Sciatic nerve (tissue), 2 donors: ENCODE measurements at regions of chr11 and their contacts with region 1.

Region 1: DNA sequence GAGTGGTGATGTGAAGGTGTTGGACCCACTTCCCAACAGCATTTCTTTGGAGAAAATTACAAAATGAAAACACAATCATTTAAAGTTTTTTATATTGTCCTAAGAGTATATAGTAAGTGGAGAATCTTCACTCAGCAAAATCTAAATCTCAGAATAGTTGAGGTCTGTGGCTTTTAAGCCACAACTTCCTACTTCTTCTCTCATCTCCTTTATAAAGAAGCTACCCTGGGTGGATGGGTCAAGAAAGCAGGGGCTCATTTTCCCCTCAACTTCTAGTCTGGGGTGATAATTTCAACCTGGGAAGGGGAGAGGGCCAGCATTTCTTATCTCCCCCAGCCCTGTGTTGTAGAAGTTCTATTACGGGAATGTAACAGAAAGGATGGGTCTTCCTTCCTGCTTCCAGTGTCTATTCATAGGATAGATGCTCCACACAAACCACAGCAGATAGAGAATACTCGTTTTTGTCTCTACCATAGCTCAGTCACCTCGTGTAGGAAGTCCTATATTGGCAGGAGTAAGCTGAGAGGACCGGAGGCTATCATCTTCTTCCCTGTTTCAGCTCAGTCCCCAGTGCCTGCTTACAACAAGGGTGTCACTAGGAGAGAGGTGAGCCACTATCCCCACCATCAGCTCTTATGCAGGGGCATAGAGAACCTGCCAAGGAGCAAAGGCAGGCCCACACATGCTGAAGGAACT is 341.5 kb downstream of the CASP12 start:
- DNase-seq: no peak
- ATAC-seq: no peak

Region 2: DNA sequence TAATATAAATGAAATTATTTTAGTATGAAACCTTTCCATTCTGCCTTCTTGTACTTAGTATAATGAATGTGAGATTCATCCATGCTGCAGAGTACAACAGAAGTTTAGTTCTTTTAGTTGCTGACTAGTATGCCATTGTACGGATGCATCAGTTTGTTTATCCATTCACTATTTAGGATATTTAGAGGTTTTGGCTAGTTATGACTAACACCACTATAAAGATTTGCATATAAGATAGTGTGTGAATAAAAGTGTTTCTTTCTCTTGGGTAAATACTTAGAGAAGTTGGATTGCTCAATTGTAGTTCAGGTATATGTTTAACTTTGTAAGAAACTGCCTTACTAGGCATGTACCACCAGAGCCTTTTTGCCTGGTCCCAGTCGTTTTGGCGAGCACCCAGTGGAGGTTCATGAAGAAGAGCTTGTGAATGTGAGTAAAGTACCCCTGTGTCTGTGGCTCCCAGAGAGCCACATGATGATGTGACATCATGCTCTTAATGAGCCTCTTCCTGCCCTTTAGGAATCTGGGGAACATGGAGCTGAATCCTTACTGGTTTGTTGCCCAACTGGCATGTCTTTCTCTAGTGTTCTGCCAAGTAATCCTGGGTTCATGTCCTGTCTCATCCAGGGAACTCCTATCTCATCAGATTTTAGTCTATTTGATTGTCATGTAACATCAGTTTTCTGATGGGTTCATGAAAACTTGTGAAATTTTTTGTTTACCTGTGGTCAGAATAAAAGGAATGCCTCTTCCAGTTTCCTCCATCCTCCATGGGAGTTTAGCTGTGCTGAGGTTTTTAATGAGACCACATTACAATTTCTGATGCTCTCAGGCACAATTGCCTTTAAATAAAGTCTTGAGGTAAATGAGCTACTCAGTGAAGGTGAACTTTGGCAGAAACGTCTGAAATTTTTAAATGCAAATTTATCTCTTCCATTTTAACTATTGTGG is 106.7 kb after region 1 on chr11:
- intact Hi-C with region 1: no loop called
- DNase-seq: no peak
- ATAC-seq: no peak

Region 3: GRCh38 chr11:105790840-105791239 is 1234.1 kb after region 1 on chr11:
- intact Hi-C with region 1: loop called (anchors 10 kb)
- DNase-seq: no peak
- ATAC-seq: no peak